Ascending aorta (tissue), 2 donors: ENCODE measurements at regions of chr14 and their contacts with region 1.

Region 1: GRCh38 chr14:21476925-21477681 is at the starts of genes RAB2B and TOX4:
- DNase-seq: peak; percentile 90 to 99
- H3K4me3 ChIP-seq: peak within 1 kb of the TSS; percentile 80 to 86
- H3K27ac ChIP-seq: peak within 1 kb of the TSS; percentile 85 to 90
- H3K4me1 ChIP-seq: peaks cover 4 to 16% of the 10 kb centered on the region in 2 donors
- H3K27me3 ChIP-seq: no peaks in the 10 kb centered on the region
- CTCF ChIP-seq: peak; percentile 97 to 98 (median 98)
- total RNA-seq, gene RAB2B: 19.2 TPM
- total RNA-seq, gene TOX4: 76.7 TPM

Region 2: GRCh38 chr14:20343092-20343861 is 1133.8 kb before region 1 on chr14 and contains the start of gene PARP2:
- intact Hi-C with region 1: loop called (anchors 2 kb)
- DNase-seq: peak; percentile 90 to 99
- H3K4me3 ChIP-seq: peak within 1 kb of the TSS; percentile 60 to 77
- H3K27ac ChIP-seq: peak within 1 kb of the TSS; percentile 87 to 89
- H3K4me1 ChIP-seq: peaks cover 4 to 9% of the 10 kb centered on the region in 2 donors
- H3K27me3 ChIP-seq: no peaks in the 10 kb centered on the region
- CTCF ChIP-seq: no peak
- total RNA-seq, gene PARP2: 0.32 TPM

Region 3: DNA sequence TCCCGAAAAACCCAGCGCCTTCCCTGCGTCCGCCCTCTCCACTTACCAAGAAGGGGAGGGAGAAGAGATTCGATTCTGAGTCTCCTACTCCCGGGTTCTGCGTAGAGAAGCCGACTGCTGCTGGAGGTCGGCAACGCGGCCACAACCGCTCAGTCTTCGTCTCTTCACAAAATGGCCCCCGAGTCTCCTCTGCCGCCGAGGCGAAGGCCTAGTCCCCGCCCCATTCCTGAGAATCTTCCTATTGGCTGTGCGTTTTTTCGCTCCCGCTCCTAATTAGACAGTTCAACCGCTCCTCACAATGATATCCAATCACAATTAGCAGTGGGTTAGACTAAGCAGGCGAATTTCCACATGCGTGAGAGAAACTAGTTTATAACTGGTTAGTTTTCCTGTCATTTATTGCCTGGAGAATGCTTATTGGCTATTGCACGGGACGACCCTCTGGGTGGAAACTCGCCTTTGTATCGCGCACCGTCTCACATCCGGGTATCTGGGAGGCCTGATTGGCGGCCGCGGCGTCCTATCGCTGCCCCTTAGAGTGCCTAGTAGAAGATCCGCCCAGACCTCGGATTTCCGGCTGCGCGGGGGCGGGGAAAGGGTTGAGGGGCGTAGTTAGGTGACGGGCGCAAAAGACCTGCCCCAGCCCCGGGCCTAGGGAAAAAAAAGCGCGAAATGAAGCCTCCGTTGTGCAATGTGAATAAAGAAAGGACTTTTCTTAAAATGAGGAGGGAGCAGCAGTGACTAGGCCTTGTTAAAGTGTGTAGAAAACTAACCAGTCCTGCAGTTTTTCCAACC is 207.7 kb before region 1 on chr14 and contains the start of gene HNRNPC:
- intact Hi-C with region 1: loop called (anchors 2 kb)
- DNase-seq: peak; percentile 100
- H3K4me3 ChIP-seq: peak within 1 kb of the TSS; percentile 67 to 95
- H3K27ac ChIP-seq: peak within 1 kb of the TSS; percentile 96 to 98
- H3K4me1 ChIP-seq: peaks cover 13% of the 10 kb centered on the region in 2 donors
- H3K27me3 ChIP-seq: no peaks in the 10 kb centered on the region
- CTCF ChIP-seq: no peak
- total RNA-seq, gene HNRNPC: 303 TPM

Region 4: GRCh38 chr14:21437063-21437901 is 39.8 kb before region 1 on chr14:
- intact Hi-C with region 1: loop called (anchors 1 kb)
- DNase-seq: peak; percentile 95 to 99
- H3K4me3 ChIP-seq: peak overlapping the region; percentile 73 to 89
- H3K27ac ChIP-seq: peak overlapping the region; percentile 86 to 89
- H3K4me1 ChIP-seq: peaks cover 8 to 15% of the 10 kb centered on the region in 2 donors
- H3K27me3 ChIP-seq: no peaks in the 10 kb centered on the region
- CTCF ChIP-seq: no peak

Region 5: GRCh38 chr14:21510735-21511657 is 33.9 kb after region 1 on chr14 and contains the start of gene METTL3:
- intact Hi-C with region 1: loop called (anchors 1 kb)
- DNase-seq: peak; percentile 94 to 99
- H3K4me3 ChIP-seq: peak within 1 kb of the TSS; percentile 80 to 82
- H3K27ac ChIP-seq: peak within 1 kb of the TSS; percentile 78 to 86
- H3K4me1 ChIP-seq: peaks cover 8 to 12% of the 10 kb centered on the region in 2 donors
- H3K27me3 ChIP-seq: no peaks in the 10 kb centered on the region
- CTCF ChIP-seq: no peak
- total RNA-seq, gene METTL3: 45.0 TPM

Region 6: GRCh38 chr14:21557084-21557901 is 80.2 kb after region 1 on chr14:
- intact Hi-C with region 1: loop called (anchors 1 kb)
- DNase-seq: peak in 1 of 2 donors; percentile 90
- H3K4me3 ChIP-seq: peak overlapping the region; percentile 48 to 57
- H3K27ac ChIP-seq: peak overlapping the region; percentile 34 to 41
- H3K4me1 ChIP-seq: peaks cover 0 to 3% of the 10 kb centered on the region in 2 donors
- H3K27me3 ChIP-seq: no peaks in the 10 kb centered on the region
- CTCF ChIP-seq: peak; percentile 61 to 67 (median 64)